OCI-LY7 (cell line): ENCODE measurements at regions of chr17 and their contacts with region 1.

Region 1: GRCh38 chr17:44999433-44999832 is 31.3 kb upstream of the C1QL1 start:
- DNase-seq: no peak
- H3K4me3 ChIP-seq: no peak overlapping the region
- H3K27ac ChIP-seq: no peak overlapping the region
- H3K4me1 ChIP-seq: no peaks in the 10 kb centered on the region
- CTCF ChIP-seq: no peak

Region 2: GRCh38 chr17:44968226-44969143 is 30.9 kb before region 1 on chr17 and contains the start of gene C1QL1:
- CTCF ChIA-PET with region 1: interaction called, 14 read pairs
- POLR2A ChIA-PET with region 1: no interaction called
- intact Hi-C with region 1: no loop called
- DNase-seq: peak; percentile 92
- H3K4me3 ChIP-seq: peak within 1 kb of the TSS; percentile 62
- H3K27ac ChIP-seq: no peak within 1 kb of the TSS
- H3K4me1 ChIP-seq: peaks cover 5% of the 10 kb centered on the region
- CTCF ChIP-seq: no peak
- total RNA-seq, gene C1QL1: not detected in 2 replicates

Region 3: DNA sequence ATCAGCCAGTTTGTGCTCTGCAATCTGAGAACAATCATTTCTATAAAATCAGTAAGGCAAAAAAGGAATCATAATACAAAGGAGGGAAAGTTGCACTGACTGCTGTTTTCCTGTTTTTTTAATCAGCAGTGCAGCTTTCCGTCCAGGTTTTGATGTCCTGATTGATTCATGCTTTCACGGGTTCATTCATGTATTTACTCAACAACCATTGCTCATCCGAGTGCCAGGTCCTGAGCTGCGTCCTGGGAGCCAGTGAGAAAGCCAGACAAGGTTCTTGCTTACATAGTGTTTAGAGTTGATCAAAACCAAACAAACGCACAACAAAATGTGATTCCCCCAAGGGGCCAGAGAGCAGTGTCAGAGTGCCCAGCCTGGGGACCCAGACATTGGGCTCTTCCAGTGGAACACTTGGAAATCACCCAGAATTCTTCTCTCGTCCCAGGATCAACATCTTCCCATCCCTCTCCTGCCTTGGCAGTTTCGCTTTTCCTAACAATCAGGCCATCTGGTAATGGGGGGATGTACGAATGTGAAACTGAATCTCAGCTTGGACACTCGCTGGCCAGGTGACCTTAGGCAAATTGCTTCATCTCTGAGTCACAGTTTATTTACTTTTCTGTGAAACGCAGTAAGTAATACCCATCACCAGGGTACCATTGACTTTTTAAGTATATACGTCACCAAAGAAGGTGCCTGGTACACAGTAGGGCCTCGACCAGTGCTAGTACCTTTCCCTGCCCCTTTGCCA is 18.0 kb before region 1 on chr17:
- CTCF ChIA-PET with region 1: no interaction called
- POLR2A ChIA-PET with region 1: no interaction called
- intact Hi-C with region 1: no loop called
- DNase-seq: no peak
- H3K4me3 ChIP-seq: no peak overlapping the region
- H3K27ac ChIP-seq: no peak overlapping the region
- H3K4me1 ChIP-seq: no peaks in the 10 kb centered on the region
- CTCF ChIP-seq: no peak

Region 4: DNA sequence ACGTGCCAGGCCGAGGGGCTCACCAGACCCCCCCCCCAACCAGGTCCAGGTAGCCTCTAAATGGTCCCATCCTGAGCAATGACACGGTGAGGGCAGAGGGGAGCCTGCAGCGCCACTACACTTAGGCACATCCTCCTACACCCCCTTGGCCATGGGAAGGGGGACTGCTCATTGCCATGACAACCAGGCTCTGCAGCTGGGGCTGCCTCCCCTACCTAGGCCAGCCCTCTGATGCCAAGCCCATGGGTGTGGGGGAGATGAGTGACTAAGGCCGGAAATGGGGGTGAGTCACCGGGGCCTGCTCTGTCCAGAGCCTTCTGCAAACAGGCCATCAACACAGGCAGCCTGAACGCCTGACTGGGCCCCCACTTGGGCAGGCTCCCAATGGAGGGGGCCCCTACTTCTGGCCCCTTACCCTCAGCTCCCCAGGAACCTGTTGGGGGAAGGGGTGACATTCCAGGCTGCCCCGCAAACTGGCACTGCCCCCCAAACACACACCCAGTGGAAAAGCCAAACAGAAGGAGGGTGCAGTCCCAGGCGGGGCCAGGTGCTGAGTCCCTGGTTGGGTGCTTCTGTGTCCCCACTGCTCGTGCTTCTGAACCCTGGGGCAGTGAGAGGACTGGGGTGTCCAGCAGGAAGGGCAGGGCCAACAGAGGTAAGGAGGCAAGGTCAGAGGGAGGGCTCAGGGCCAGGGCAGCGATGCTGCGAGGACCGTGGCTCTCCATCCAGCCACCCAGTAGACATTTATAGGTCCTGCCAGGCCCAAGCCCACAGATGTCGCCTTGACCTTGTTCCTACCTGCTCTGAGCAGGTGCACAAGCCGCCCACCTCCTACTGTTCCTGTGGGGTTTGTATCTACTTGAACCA is 124.7 kb after region 1 on chr17:
- CTCF ChIA-PET with region 1: no interaction called
- POLR2A ChIA-PET with region 1: no interaction called
- intact Hi-C with region 1: no loop called
- DNase-seq: peak; percentile 17
- H3K4me3 ChIP-seq: no peak overlapping the region
- H3K27ac ChIP-seq: no peak overlapping the region
- H3K4me1 ChIP-seq: no peaks in the 10 kb centered on the region
- CTCF ChIP-seq: no peak

Region 5: GRCh38 chr17:45148183-45149036 is 149.0 kb after region 1 on chr17 and contains the start of gene HEXIM1:
- CTCF ChIA-PET with region 1: no interaction called
- POLR2A ChIA-PET with region 1: no interaction called
- intact Hi-C with region 1: no loop called
- DNase-seq: peak; percentile 100
- H3K4me3 ChIP-seq: peak within 1 kb of the TSS; percentile 75
- H3K27ac ChIP-seq: peak within 1 kb of the TSS; percentile 88
- H3K4me1 ChIP-seq: peaks cover 46% of the 10 kb centered on the region
- CTCF ChIP-seq: no peak
- total RNA-seq, gene HEXIM1: 12.1 and 13.9 TPM in 2 replicates